ENCODE measurements at regions of chr1 and their contacts with region 1.

Region 1: DNA sequence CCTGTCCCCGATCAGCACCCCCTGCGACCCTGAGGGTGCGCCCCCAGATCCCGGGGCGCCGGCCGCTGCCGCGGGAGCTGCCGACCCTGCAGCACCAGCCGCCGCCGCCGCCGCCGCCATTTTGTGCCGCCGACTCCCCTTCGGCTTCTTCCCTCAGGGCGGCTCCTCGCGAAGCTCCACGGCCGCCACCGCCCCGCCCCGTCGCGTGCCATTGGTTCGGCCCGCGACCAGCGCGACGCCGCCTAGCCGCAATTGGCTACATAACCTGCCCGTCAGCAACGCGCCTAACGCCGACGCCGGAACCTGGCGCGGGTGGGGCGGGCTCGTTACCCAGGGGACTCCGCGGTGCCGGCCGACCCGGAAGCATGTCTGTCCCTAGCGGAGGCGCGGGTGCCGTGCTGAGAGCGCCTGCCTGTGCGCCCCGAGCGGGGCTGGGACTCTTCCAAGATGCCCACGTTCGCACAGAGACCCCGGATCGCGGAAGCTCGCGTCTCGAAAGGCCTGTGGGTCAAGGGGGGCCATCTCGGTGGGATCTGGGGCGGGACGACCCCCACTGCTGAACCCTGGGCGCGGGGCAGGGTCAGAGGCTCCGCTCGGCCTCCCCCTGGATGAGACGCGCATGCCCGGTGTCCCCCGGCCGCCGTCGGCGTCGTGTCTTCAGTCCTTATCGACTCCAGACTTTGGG is at the start of gene CCNL2:
- H3K4me3 Mint-ChIP-seq: peak within 1 kb of the TSS; percentile 91
- H3K27ac Mint-ChIP-seq: peak within 1 kb of the TSS; percentile 90
- H3K4me1 Mint-ChIP-seq: peaks cover 50% of the 10 kb centered on the region
- H3K27me3 Mint-ChIP-seq: no peaks in the 10 kb centered on the region

Region 2: DNA sequence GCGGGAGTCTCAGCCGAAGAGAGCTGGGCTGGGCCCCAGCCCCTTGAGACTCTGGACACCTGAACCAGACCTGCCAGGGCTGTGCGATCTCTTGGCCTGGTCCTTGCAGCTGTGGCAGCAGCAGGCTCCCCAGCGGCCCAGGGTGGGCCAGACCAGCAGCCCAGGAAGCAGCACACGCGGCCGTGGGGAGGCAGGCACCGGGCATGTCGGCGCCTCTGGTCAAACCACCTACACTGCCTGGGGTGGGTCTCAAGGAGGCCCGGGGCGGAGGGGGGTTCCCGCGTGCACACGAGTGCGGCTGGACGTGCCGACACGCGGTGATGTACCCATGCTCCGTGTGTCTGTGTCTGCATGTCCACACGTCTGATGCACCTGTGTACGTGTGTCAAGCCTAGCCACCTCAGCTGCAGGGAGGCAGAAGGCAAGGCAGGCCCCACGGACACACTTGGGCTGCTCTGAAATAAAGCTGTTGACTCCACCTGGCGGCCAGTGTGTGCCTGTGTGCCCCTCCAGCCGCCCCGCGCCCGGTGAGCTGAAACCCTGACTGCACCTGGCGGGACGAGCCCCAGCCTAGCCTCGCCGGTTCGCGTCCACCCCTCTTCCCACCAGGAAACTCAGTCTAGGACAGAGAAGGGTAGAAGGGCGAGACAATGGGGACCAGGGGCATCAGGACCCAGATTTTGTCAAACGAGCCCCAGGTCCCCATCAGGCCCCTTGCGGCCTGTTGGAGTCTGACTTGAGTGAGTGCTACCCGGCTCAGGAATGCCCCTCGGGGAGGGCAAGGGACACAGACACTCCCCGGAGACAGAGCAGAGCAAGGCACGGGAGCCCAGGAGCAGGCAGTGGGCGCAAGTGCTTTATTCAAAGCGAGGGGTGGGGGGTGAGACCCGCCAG is 107.5 kb before region 1 on chr1:
- intact Hi-C with region 1: no loop called
- H3K4me3 Mint-ChIP-seq: no peak overlapping the region
- H3K27ac Mint-ChIP-seq: no peak overlapping the region
- H3K4me1 Mint-ChIP-seq: no peaks in the 10 kb centered on the region
- H3K27me3 Mint-ChIP-seq: peaks cover 3% of the 10 kb centered on the region

Region 3: GRCh38 chr1:1349256-1350012 is 49.9 kb before region 1 on chr1 and contains the start of gene DVL1:
- intact Hi-C with region 1: no loop called
- H3K4me3 Mint-ChIP-seq: peak within 1 kb of the TSS; percentile 82
- H3K27ac Mint-ChIP-seq: peak within 1 kb of the TSS; percentile 66
- H3K4me1 Mint-ChIP-seq: peaks cover 55% of the 10 kb centered on the region
- H3K27me3 Mint-ChIP-seq: peaks cover 32% of the 10 kb centered on the region

Region 4: DNA sequence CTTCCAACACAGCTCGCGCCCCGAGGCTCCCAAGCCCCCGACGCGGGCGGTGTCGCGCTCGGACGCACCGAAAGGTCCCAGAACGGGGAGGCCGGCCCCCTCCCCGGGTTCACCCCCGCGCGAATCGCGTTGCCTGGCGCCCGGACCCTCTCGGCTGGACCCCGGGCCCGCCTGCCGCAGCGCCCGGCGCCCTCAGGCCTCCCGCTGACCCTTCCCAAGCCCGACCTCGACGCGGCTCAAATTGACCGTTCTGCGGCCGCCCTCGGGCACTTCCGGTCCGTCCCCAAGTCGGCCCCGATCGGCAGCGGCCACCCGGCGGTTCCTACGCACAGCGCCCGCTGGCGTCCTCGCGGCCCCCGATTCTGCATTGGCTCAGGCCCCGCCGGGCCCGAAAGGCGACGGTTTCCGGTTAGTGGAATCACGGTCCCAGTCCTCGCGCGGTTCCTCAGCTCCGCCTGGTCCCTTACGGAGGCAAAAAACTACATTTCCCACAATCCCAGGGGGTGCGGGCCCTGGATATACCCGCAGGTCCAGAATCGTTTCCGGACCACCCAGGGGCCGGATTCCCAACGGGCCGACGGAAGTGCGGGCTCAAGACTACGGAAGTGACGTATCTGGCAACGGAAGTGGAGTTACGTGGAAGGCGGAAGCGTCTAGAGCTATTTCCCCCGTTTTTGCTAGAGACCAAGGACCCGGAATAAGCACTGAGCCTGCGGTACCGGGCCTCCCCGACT is 24.2 kb before region 1 on chr1 and contains the start of gene AURKAIP1:
- intact Hi-C with region 1: loop called (anchors 1 kb)
- H3K4me3 Mint-ChIP-seq: peak within 1 kb of the TSS; percentile 82
- H3K27ac Mint-ChIP-seq: peak within 1 kb of the TSS; percentile 93
- H3K4me1 Mint-ChIP-seq: peaks cover 28% of the 10 kb centered on the region
- H3K27me3 Mint-ChIP-seq: no peaks in the 10 kb centered on the region